ENCODE measurements at regions of chr4 and their contacts with region 1.

Region 1: DNA sequence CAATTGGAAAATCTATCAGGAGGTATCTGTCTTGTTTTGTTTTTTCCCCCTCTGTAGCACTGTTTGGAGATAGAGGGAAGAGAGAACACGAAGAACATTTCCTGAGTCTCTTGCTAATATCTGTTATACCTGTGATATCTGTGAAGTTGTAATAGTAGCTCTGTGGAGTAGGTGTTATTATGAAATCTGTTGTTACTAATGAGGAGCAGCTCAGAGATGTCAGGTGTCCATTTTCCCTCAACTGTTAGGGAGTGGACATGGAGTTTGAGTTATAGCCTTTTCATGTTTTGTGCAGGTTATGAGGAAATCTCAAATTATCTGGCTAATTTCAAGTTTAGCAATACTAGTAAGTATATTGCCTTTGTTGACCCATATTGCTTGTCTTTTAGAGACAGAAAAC is 52.4 kb downstream of the SEC24B start:
- DNase-seq: no peak
- ATAC-seq: no peak
- H3K4me3 ChIP-seq: no peak overlapping the region
- H3K4me3 Mint-ChIP-seq: no peak overlapping the region
- H3K27ac ChIP-seq: no peak overlapping the region
- H3K27ac Mint-ChIP-seq: peak overlapping the region in 4 of 9 donors; percentile 33 to 75 (median 49)
- H3K4me1 ChIP-seq: no peaks in the 10 kb centered on the region
- H3K4me1 Mint-ChIP-seq: peaks cover 5 to 63% (median 43%) of the 10 kb centered on the region in 7 donors
- H3K27me3 ChIP-seq: no peaks in the 10 kb centered on the region
- H3K27me3 Mint-ChIP-seq: no peaks in the 10 kb centered on the region

Region 2: DNA sequence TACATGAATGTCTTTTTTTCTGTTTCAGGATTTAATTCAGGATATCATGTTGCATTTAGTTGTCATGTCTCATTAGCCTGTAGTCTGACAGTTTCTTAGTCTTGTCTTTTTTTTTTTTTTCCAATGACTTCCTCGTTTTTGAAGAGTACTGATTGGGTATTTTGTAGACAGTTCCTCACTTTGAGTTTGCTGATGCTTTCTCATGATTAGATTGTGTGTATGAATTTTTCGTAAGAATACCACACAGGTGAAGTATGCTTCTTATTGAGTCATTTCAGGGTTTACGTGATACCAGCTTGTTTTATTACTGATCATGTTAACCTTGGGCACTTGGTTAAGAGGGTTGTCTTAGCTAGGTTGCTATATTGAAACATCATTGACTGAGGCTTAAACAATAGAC is 37.2 kb before region 1 on chr4:
- CTCF ChIA-PET with region 1: no interaction called
- POLR2A ChIA-PET with region 1: no interaction called
- intact Hi-C with region 1: loop called in 1 of 2 experiments (anchors 2 kb)
- DNase-seq: no peak
- ATAC-seq: no peak
- H3K4me3 ChIP-seq: no peak overlapping the region
- H3K4me3 Mint-ChIP-seq: peak overlapping the region in 1 of 10 donors; percentile 19
- H3K27ac ChIP-seq: no peak overlapping the region
- H3K27ac Mint-ChIP-seq: peak overlapping the region in 1 of 9 donors; percentile 3
- H3K4me1 ChIP-seq: peaks cover 6 to 7% of the 10 kb centered on the region in 2 donors
- H3K4me1 Mint-ChIP-seq: peaks cover 30 to 79% (median 71%) of the 10 kb centered on the region in 7 donors
- H3K27me3 ChIP-seq: no peaks in the 10 kb centered on the region
- H3K27me3 Mint-ChIP-seq: no peaks in the 10 kb centered on the region

Region 3: GRCh38 chr4:109462297-109462696 is 23.7 kb before region 1 on chr4:
- CTCF ChIA-PET with region 1: no interaction called
- POLR2A ChIA-PET with region 1: no interaction called
- intact Hi-C with region 1: loop called in 1 of 2 experiments (anchors 2 kb)
- DNase-seq: no peak
- ATAC-seq: no peak
- H3K4me3 ChIP-seq: no peak overlapping the region
- H3K4me3 Mint-ChIP-seq: no peak overlapping the region
- H3K27ac ChIP-seq: peak overlapping the region; percentile 18
- H3K27ac Mint-ChIP-seq: peak overlapping the region in 2 of 9 donors; percentile 10 to 33
- H3K4me1 ChIP-seq: no peaks in the 10 kb centered on the region
- H3K4me1 Mint-ChIP-seq: peaks cover 3 to 74% (median 46%) of the 10 kb centered on the region in 7 donors
- H3K27me3 ChIP-seq: no peaks in the 10 kb centered on the region
- H3K27me3 Mint-ChIP-seq: no peaks in the 10 kb centered on the region

Region 4: GRCh38 chr4:109511414-109511813 is 25.4 kb after region 1 on chr4:
- CTCF ChIA-PET with region 1: interaction called, 3 read pairs
- POLR2A ChIA-PET with region 1: no interaction called
- intact Hi-C with region 1: loop called in 1 of 2 experiments (anchors 5 kb)
- DNase-seq: no peak
- ATAC-seq: no peak
- H3K4me3 ChIP-seq: no peak overlapping the region
- H3K4me3 Mint-ChIP-seq: no peak overlapping the region
- H3K27ac ChIP-seq: no peak overlapping the region
- H3K27ac Mint-ChIP-seq: peak overlapping the region in 3 of 9 donors; percentile 4 to 61 (median 6)
- H3K4me1 ChIP-seq: no peaks in the 10 kb centered on the region
- H3K4me1 Mint-ChIP-seq: peaks cover 0 to 9% (median 3%) of the 10 kb centered on the region in 7 donors
- H3K27me3 ChIP-seq: no peaks in the 10 kb centered on the region
- H3K27me3 Mint-ChIP-seq: no peaks in the 10 kb centered on the region

Region 5: GRCh38 chr4:109532182-109532581 is 46.2 kb after region 1 on chr4:
- CTCF ChIA-PET with region 1: no interaction called
- POLR2A ChIA-PET with region 1: no interaction called
- intact Hi-C with region 1: loop called in 1 of 2 experiments (anchors 5 kb)
- DNase-seq: no peak
- ATAC-seq: no peak
- H3K4me3 ChIP-seq: no peak overlapping the region
- H3K4me3 Mint-ChIP-seq: no peak overlapping the region
- H3K27ac ChIP-seq: no peak overlapping the region
- H3K27ac Mint-ChIP-seq: peak overlapping the region in 2 of 9 donors; percentile 27 to 28
- H3K4me1 ChIP-seq: no peaks in the 10 kb centered on the region
- H3K4me1 Mint-ChIP-seq: peaks cover 0 to 5% (median 0%) of the 10 kb centered on the region in 7 donors
- H3K27me3 ChIP-seq: no peaks in the 10 kb centered on the region
- H3K27me3 Mint-ChIP-seq: no peaks in the 10 kb centered on the region

Region 6: DNA sequence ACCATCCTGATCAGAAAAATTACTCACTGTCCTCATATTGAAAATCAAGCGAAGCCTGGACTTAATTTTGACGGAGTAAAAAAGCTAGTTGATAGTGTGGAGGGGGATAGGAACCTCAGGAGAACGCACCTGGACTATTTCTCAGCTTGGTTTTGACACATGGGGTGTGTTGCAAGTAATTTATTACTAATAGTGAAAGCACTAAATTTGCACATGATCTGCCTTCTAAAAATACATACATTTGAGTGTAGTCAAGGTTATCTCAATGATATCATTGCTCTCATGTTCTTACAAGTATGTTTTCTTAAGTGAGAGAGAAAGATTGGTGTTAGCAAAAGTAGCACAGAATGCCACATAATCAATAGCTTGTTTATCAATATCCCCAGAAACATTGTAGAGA is 391.4 kb after region 1 on chr4:
- CTCF ChIA-PET with region 1: no interaction called
- POLR2A ChIA-PET with region 1: no interaction called
- intact Hi-C with region 1: no loop called
- DNase-seq: no peak
- ATAC-seq: no peak
- H3K4me3 ChIP-seq: no peak overlapping the region
- H3K4me3 Mint-ChIP-seq: no peak overlapping the region
- H3K27ac ChIP-seq: no peak overlapping the region
- H3K27ac Mint-ChIP-seq: no peak overlapping the region
- H3K4me1 ChIP-seq: no peaks in the 10 kb centered on the region
- H3K4me1 Mint-ChIP-seq: no peaks in the 10 kb centered on the region
- H3K27me3 ChIP-seq: no peaks in the 10 kb centered on the region
- H3K27me3 Mint-ChIP-seq: peaks cover 5 to 20% (median 13%) of the 10 kb centered on the region in 5 donors

Region 7: DNA sequence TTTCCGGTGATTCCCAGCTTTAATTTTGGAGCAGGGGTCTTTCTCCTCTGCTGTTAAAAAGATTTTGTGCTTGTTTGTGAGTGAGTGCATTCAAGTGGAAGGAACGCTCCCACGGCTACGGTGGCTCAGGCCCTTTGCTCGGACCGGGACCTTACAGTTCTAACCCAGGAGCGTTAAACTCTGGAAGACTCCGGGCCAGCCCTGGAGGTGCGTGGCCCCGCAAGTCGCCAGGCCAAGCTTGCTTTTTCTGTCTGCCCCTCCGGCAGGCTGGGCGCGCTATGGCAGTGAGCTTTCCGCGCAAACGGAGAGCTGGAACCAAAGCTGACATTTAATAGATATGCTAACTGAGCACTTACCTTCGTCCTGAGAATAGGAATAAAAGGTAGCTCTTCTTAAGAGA is 1155.2 kb after region 1 on chr4:
- CTCF ChIA-PET with region 1: no interaction called
- POLR2A ChIA-PET with region 1: no interaction called
- intact Hi-C with region 1: no loop called
- DNase-seq: no peak
- ATAC-seq: no peak
- H3K4me3 ChIP-seq: no peak overlapping the region
- H3K4me3 Mint-ChIP-seq: no peak overlapping the region
- H3K27ac ChIP-seq: no peak overlapping the region
- H3K27ac Mint-ChIP-seq: no peak overlapping the region
- H3K4me1 ChIP-seq: no peaks in the 10 kb centered on the region
- H3K4me1 Mint-ChIP-seq: peaks cover 0 to 9% (median 0%) of the 10 kb centered on the region in 7 donors
- H3K27me3 ChIP-seq: peaks cover 6 to 20% of the 10 kb centered on the region in 2 donors
- H3K27me3 Mint-ChIP-seq: peaks cover 74 to 83% (median 82%) of the 10 kb centered on the region in 5 donors

Measured in naive thymus-derived CD4-positive, alpha-beta T cell (primary cell).